ENCODE measurements at regions of chr2 and their contacts with region 1.

Region 1: GRCh38 chr2:160269803-160270570 is 69.9 kb upstream of the ITGB6 start:
- DNase-seq: peak; percentile 92
- H3K4me3 ChIP-seq: peak overlapping the region in 2 of 3 experiments; percentile 34 to 44
- H3K27ac ChIP-seq: peak overlapping the region; percentile 93
- H3K4me1 ChIP-seq: peaks cover 25% of the 10 kb centered on the region
- H3K27me3 ChIP-seq: no peaks in the 10 kb centered on the region
- CTCF ChIP-seq: peak; percentile 65 to 79
- POLR2A ChIP-seq: peak; percentile 76

Region 2: DNA sequence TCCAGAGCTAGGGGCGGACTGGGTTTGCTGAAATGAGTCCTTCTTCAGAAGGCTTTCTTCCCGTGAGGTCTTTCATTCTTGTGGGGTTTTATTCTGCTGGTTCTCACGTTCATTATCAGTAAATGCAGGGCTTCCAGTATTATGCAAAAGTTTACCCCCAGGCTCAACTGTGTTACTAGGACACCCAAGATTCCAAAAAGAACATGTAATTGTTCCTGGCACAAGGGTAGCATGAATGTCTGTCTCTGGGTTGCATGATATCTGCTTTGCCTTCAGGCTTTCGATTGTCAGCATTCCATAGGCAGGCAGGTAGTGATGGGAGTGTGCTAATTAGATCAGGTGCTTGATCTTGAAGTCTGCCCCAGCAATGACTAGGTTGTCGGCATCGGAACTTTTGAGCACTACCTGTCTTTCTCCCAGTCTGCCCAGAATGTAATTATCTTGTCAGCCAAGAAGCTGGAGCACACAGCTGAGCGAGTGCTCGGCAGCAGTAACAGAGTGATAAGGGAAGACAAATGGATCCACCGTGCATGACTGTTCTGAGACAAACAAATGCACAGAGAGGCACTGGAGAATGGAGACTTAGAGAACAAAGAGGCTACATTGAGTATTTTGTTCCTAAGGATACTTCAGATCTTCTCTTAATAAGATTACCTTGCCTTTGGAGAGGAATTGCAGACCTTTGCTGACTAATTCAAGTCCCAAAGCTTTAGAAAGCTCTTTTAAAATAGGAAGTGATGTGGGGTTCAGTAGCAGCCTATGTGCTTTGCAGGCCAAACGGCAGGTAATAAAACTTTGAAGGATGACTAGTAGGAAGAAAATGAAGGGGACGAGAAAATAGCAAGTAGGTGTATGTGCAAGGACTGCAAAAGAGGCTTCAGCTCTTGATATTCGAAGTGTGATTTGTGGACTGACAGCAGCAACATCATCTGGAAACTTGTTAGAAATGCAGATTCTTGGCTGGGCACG is 111.8 kb before region 1 on chr2:
- CTCF ChIA-PET with region 1: interaction called, 18 read pairs
- POLR2A ChIA-PET with region 1: no interaction called
- dilution Hi-C with region 1: no loop called
- intact Hi-C with region 1: loop called (anchors 1 kb)
- DNase-seq: no peak
- H3K4me3 ChIP-seq: no peak overlapping the region
- H3K27ac ChIP-seq: no peak overlapping the region
- H3K4me1 ChIP-seq: peaks cover 18% of the 10 kb centered on the region
- H3K27me3 ChIP-seq: no peaks in the 10 kb centered on the region
- CTCF ChIP-seq: no peak
- POLR2A ChIP-seq: no peak

Region 3: GRCh38 chr2:160229592-160229991 is 40.4 kb before region 1 on chr2:
- CTCF ChIA-PET with region 1: interaction called, 9 read pairs
- POLR2A ChIA-PET with region 1: no interaction called
- dilution Hi-C with region 1: no loop called
- intact Hi-C with region 1: loop called (anchors 1 kb)
- DNase-seq: peak; percentile 84
- H3K4me3 ChIP-seq: no peak overlapping the region
- H3K27ac ChIP-seq: peak overlapping the region; percentile 95
- H3K4me1 ChIP-seq: peaks cover 59% of the 10 kb centered on the region
- H3K27me3 ChIP-seq: no peaks in the 10 kb centered on the region
- CTCF ChIP-seq: no peak
- POLR2A ChIP-seq: peak; percentile 43

Region 4: DNA sequence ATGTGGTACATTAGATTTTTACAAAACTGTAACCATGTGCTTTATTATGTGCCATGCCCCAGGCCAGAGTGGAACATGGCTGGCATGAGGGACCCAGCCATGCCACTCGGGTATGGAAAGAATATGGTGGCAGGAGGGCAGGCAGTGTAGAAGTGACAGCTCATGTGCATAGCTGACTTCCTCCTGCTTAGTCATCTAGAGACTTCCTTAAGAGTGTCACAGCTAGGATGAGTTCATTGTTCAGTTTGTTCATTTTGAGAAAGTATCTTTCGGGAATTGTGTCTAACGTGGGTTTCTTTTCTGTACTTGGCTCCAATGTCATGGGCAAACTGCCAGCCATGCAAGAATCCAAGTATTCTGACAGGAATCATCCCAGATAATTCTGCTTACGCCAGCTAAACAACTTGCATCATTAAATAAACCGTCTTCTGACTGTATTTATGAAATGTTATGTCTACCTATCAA is 24.4 kb after region 1 on chr2:
- CTCF ChIA-PET with region 1: interaction called, 14 read pairs
- POLR2A ChIA-PET with region 1: no interaction called
- dilution Hi-C with region 1: no loop called
- intact Hi-C with region 1: no loop called
- DNase-seq: peak; percentile 51
- H3K4me3 ChIP-seq: no peak overlapping the region
- H3K27ac ChIP-seq: peak overlapping the region; percentile 29
- H3K4me1 ChIP-seq: peaks cover 54% of the 10 kb centered on the region
- H3K27me3 ChIP-seq: no peaks in the 10 kb centered on the region
- CTCF ChIP-seq: no peak
- POLR2A ChIP-seq: no peak

Region 5: GRCh38 chr2:160918906-160919503 is 649.0 kb after region 1 on chr2:
- CTCF ChIA-PET with region 1: no interaction called
- POLR2A ChIA-PET with region 1: no interaction called
- dilution Hi-C with region 1: no loop called
- intact Hi-C with region 1: loop called (anchors 10 kb)
- DNase-seq: peak; percentile 68
- H3K4me3 ChIP-seq: no peak overlapping the region
- H3K27ac ChIP-seq: no peak overlapping the region
- H3K4me1 ChIP-seq: peaks cover 11% of the 10 kb centered on the region
- H3K27me3 ChIP-seq: no peaks in the 10 kb centered on the region
- CTCF ChIP-seq: peak; percentile 68 to 73
- POLR2A ChIP-seq: no peak

Region 6: GRCh38 chr2:161077367-161078210 is 807.6 kb after region 1 on chr2:
- CTCF ChIA-PET with region 1: no interaction called
- POLR2A ChIA-PET with region 1: no interaction called
- dilution Hi-C with region 1: no loop called
- intact Hi-C with region 1: loop called (anchors 10 kb)
- DNase-seq: peak; percentile 99
- H3K4me3 ChIP-seq: no peak overlapping the region
- H3K27ac ChIP-seq: peak overlapping the region; percentile 99
- H3K4me1 ChIP-seq: peaks cover 37% of the 10 kb centered on the region
- H3K27me3 ChIP-seq: no peaks in the 10 kb centered on the region
- CTCF ChIP-seq: no peak
- POLR2A ChIP-seq: no peak